B cell (primary cell): ENCODE measurements at regions of chr7 and their contacts with region 1.

Region 1: DNA sequence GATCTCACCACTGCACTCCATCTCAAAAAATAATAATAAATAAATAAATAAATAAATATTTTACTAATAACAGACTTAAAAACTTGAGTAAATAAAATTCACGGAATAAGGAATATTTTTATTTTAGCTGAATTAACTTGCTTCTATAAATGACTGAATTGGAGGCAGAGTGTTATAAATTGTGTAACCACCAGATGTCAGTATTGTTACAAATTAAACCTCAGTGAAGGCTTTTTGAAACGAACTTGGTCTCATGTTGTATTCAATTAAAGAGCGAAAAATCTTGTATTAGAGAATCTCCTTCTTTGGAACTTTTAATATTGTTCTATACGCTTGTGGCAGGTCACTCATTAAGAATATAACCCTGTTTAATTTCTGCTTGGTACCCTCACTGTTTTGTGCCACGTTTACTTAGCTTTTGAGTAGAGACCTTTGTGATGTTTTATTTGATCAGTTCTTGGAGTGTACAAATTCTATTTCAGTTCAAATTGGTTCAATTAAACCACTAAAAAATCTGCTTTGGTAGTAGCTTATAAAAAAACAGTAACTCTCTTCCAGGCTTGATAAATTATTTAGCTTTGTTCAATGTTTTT is 45.6 kb upstream of the SCIN start:
- DNase-seq: peak; percentile 58
- ATAC-seq: no peak
- H3K4me3 ChIP-seq: no peak overlapping the region
- H3K4me3 Mint-ChIP-seq: no peak overlapping the region
- H3K27ac ChIP-seq: no peak overlapping the region
- H3K27ac Mint-ChIP-seq: no peak overlapping the region
- H3K4me1 ChIP-seq: no peaks in the 10 kb centered on the region
- H3K4me1 Mint-ChIP-seq: no peaks in the 10 kb centered on the region
- H3K27me3 ChIP-seq: peaks cover 0 to 7% (median 0%) of the 10 kb centered on the region in 4 experiments
- H3K27me3 Mint-ChIP-seq: peaks cover 9% of the 10 kb centered on the region
- CTCF ChIP-seq: peak; percentile 92

Region 2: DNA sequence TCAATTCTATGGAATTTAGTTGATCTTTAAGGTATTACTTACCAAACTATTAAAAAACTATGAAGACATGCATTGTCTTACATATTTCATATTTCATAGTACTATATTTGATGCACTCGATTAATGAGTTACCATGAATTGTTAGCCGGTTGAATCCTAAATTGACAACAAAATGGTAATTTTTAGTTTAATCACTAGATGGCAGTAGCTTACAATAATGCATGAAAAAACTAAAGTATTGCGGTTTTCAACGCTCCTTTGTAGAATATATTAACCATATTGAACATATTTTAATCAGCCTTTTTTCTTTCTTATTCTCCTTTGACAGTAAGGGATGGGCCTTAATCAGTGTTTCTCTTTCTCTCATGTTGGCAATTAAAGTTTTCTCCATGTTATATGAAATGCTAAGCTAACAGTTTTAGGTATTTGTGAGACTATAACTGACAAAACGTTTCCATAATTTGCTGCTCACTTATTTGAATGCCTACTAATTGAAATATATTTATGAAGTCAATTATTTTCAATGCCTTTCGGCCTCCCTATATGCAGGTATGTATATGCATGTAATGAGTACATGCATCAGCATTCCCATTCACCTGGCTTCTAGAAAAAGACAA is 114.1 kb after region 1 on chr7:
- CTCF ChIA-PET with region 1: interaction called, 7 read pairs
- POLR2A ChIA-PET with region 1: no interaction called
- intact Hi-C with region 1: loop called (anchors 1 kb)
- DNase-seq: peak; percentile 71
- ATAC-seq: peak; percentile 51
- H3K4me3 ChIP-seq: peak overlapping the region in 1 of 5 experiments; percentile 50
- H3K4me3 Mint-ChIP-seq: no peak overlapping the region
- H3K27ac ChIP-seq: peak overlapping the region in 1 of 2 donors; percentile 65
- H3K27ac Mint-ChIP-seq: no peak overlapping the region
- H3K4me1 ChIP-seq: peaks cover 24 to 33% of the 10 kb centered on the region in 2 donors
- H3K4me1 Mint-ChIP-seq: peaks cover 21% of the 10 kb centered on the region
- H3K27me3 ChIP-seq: no peaks in the 10 kb centered on the region
- H3K27me3 Mint-ChIP-seq: peaks cover 3% of the 10 kb centered on the region
- CTCF ChIP-seq: peak; percentile 87

Region 3: DNA sequence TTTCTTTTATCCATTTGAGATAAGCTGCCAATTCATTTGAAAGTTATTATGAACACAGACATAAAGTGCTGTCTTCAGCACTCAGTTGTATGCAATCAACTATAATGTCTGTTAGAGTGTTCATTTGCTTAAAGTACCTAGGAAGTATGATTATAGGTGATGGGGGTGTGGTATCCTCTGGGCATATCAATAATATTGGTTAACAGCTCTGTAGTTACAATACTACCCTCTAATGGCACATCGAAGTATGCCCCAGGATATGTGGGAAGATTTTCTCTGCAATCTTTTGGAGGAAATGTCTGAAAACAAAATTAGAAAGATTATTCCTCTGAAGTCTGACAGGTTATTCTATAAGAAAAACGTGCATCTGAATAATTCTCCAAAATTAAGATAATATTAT is 592.2 kb after region 1 on chr7:
- CTCF ChIA-PET with region 1: interaction called, 11 read pairs
- POLR2A ChIA-PET with region 1: no interaction called
- intact Hi-C with region 1: loop called (anchors 10 kb)
- DNase-seq: peak; percentile 18
- ATAC-seq: no peak
- H3K4me3 ChIP-seq: no peak overlapping the region
- H3K4me3 Mint-ChIP-seq: no peak overlapping the region
- H3K27ac ChIP-seq: no peak overlapping the region
- H3K27ac Mint-ChIP-seq: no peak overlapping the region
- H3K4me1 ChIP-seq: no peaks in the 10 kb centered on the region
- H3K4me1 Mint-ChIP-seq: peaks cover 3% of the 10 kb centered on the region
- H3K27me3 ChIP-seq: no peaks in the 10 kb centered on the region
- H3K27me3 Mint-ChIP-seq: no peaks in the 10 kb centered on the region
- CTCF ChIP-seq: no peak

Region 4: DNA sequence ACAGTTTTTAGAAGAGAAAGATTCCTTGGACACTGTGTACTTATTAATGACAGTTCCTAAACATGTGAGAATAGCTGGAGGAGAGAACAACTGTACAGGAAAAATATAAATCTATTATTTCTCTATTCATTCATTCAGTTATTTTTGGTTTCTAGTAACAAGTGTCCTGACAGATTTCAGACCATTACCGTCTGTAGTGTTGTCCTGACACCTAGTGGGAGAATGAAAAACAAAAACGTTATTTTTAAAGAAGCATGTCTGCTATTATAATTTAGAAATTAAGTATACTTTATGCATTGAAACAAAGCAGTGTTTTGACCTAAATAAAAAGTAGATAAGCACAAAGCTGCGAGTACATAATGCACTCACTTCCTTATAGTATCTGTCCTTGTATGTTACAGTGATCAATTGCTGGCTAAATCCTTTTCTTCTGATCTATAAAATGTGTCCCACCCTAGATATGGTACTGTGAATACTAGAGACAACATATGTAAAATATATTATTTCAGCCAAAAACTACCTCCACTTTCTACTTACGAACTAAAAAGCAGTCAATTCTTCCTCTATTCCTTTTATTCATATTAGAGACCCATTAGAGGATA is 738.1 kb after region 1 on chr7:
- CTCF ChIA-PET with region 1: interaction called, 94 read pairs
- POLR2A ChIA-PET with region 1: no interaction called
- intact Hi-C with region 1: loop called (anchors 1 kb)
- DNase-seq: peak; percentile 59
- ATAC-seq: no peak
- H3K4me3 ChIP-seq: no peak overlapping the region
- H3K4me3 Mint-ChIP-seq: no peak overlapping the region
- H3K27ac ChIP-seq: no peak overlapping the region
- H3K27ac Mint-ChIP-seq: no peak overlapping the region
- H3K4me1 ChIP-seq: no peaks in the 10 kb centered on the region
- H3K4me1 Mint-ChIP-seq: no peaks in the 10 kb centered on the region
- H3K27me3 ChIP-seq: no peaks in the 10 kb centered on the region
- H3K27me3 Mint-ChIP-seq: no peaks in the 10 kb centered on the region
- CTCF ChIP-seq: peak; percentile 79

Region 5: DNA sequence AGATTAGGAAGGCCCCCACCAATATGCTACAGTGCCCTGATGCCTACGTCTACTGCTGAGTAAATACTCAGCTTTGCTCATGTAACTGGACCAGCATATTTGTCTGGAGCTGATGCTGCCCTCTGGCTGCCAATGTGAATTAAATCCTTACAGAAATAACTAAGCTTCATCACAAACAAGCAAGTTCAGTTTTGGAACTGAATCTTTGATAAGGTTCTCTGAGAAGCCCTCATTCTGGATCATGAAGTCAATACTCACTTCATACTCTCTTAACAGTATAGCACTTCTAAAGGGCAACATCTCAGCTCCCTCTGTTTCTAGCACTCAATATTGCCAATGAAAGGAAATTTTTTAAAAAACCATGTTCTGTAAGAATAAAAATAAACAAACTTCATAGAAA is 1217.9 kb after region 1 on chr7:
- CTCF ChIA-PET with region 1: interaction called, 4 read pairs
- POLR2A ChIA-PET with region 1: no interaction called
- intact Hi-C with region 1: loop called (anchors 5 kb)
- DNase-seq: no peak
- ATAC-seq: no peak
- H3K4me3 ChIP-seq: no peak overlapping the region
- H3K4me3 Mint-ChIP-seq: no peak overlapping the region
- H3K27ac ChIP-seq: no peak overlapping the region
- H3K27ac Mint-ChIP-seq: no peak overlapping the region
- H3K4me1 ChIP-seq: no peaks in the 10 kb centered on the region
- H3K4me1 Mint-ChIP-seq: no peaks in the 10 kb centered on the region
- H3K27me3 ChIP-seq: no peaks in the 10 kb centered on the region
- H3K27me3 Mint-ChIP-seq: no peaks in the 10 kb centered on the region
- CTCF ChIP-seq: no peak

Region 6: GRCh38 chr7:14457568-14458453 is 1932.9 kb after region 1 on chr7:
- CTCF ChIA-PET with region 1: interaction called, 9 read pairs
- POLR2A ChIA-PET with region 1: no interaction called
- intact Hi-C with region 1: loop called (anchors 5 kb)
- DNase-seq: peak; percentile 42
- ATAC-seq: peak; percentile 28
- H3K4me3 ChIP-seq: no peak overlapping the region
- H3K4me3 Mint-ChIP-seq: no peak overlapping the region
- H3K27ac ChIP-seq: no peak overlapping the region
- H3K27ac Mint-ChIP-seq: no peak overlapping the region
- H3K4me1 ChIP-seq: no peaks in the 10 kb centered on the region
- H3K4me1 Mint-ChIP-seq: no peaks in the 10 kb centered on the region
- H3K27me3 ChIP-seq: no peaks in the 10 kb centered on the region
- H3K27me3 Mint-ChIP-seq: no peaks in the 10 kb centered on the region
- CTCF ChIP-seq: peak; percentile 84